ENCODE measurements at regions of chr1 and their contacts with region 1.

Region 1: DNA sequence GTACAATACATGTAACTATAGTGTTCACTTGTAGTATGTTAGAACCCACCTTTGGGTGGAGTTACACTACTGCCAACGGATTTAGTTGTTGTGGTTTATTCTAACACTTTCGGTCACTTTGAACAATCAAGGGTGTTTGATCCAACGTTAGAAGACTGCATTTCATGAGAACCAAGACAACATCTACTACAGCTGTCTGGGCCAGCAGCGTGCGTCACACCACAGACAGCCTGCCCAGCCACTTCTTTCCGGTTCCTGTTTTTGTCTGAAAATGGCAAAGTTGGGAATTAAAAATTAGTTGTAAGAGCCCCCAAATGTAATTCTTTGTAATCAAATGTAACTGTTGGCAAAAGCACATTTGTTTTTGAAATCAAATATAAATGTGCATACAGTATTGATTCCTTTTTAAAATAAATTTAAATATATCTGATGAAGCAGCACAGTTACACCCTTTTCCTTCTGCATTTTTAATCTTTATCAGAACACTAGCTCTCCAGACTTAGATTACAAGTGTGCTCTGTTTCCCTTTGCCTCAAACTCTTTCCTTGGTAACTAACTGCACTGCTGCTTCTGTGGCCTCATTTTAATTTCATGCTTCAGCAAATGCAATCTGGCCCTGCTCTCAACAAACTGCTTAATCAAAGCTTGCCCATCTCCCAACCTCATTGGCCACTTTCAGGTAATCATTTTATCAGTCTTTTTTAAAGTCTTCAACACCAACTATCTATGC is 86.6 kb upstream of the DPH5 start:
- DNase-seq: peak; percentile 53 to 96 (median 73)
- ATAC-seq: peak; percentile 89
- H3K4me3 ChIP-seq: peak overlapping the region in 1 of 2 experiments; percentile 23
- H3K4me3 Mint-ChIP-seq: peak overlapping the region; percentile 66
- H3K27ac ChIP-seq: peak overlapping the region; percentile 84 to 93
- H3K27ac Mint-ChIP-seq: peak overlapping the region; percentile 99
- H3K4me1 ChIP-seq: peaks cover 42% of the 10 kb centered on the region
- H3K4me1 Mint-ChIP-seq: peaks cover 64% of the 10 kb centered on the region
- H3K27me3 ChIP-seq: no peaks in the 10 kb centered on the region
- H3K27me3 Mint-ChIP-seq: no peaks in the 10 kb centered on the region
- CTCF ChIP-seq: no peak

Region 2: DNA sequence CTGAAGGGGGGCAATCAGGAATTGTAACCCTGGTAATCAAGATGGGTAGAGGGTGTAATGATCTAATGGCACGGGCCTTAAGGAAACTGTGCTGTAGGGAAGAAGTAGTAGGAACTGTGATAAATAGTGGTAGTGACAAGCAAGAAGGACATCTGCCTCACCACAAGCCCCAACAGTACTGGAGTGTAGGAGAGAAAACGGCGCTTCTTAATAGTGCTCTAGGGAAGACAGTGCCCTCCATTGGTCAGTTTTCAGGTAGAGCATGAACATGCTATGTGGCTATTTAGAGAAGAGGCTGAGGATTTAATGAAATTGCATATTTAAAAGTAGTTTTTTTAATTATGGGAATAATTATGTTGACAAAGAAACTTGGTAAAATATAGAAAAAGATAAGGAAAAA is 184.1 kb before region 1 on chr1:
- CTCF ChIA-PET with region 1: interaction called, 4 read pairs
- POLR2A ChIA-PET with region 1: interaction called, 4 read pairs
- intact Hi-C with region 1: loop called (anchors 1 to 5 kb)
- DNase-seq: peak in 3 of 9 experiments; percentile 19 to 65 (median 48)
- ATAC-seq: no peak
- H3K4me3 ChIP-seq: peak overlapping the region in 1 of 2 experiments; percentile 13
- H3K4me3 Mint-ChIP-seq: no peak overlapping the region
- H3K27ac ChIP-seq: peak overlapping the region; percentile 40 to 78
- H3K27ac Mint-ChIP-seq: no peak overlapping the region
- H3K4me1 ChIP-seq: peaks cover 85% of the 10 kb centered on the region
- H3K4me1 Mint-ChIP-seq: peaks cover 45% of the 10 kb centered on the region
- H3K27me3 ChIP-seq: no peaks in the 10 kb centered on the region
- H3K27me3 Mint-ChIP-seq: no peaks in the 10 kb centered on the region
- CTCF ChIP-seq: no peak

Region 3: GRCh38 chr1:101060992-101061391 is 51.2 kb before region 1 on chr1:
- CTCF ChIA-PET with region 1: no interaction called
- POLR2A ChIA-PET with region 1: no interaction called
- intact Hi-C with region 1: loop called in 1 of 2 experiments (anchors 5 kb)
- DNase-seq: no peak
- ATAC-seq: no peak
- H3K4me3 ChIP-seq: no peak overlapping the region
- H3K4me3 Mint-ChIP-seq: no peak overlapping the region
- H3K27ac ChIP-seq: no peak overlapping the region
- H3K27ac Mint-ChIP-seq: no peak overlapping the region
- H3K4me1 ChIP-seq: peaks cover 12% of the 10 kb centered on the region
- H3K4me1 Mint-ChIP-seq: peaks cover 32% of the 10 kb centered on the region
- H3K27me3 ChIP-seq: no peaks in the 10 kb centered on the region
- H3K27me3 Mint-ChIP-seq: no peaks in the 10 kb centered on the region
- CTCF ChIP-seq: no peak

Region 4: DNA sequence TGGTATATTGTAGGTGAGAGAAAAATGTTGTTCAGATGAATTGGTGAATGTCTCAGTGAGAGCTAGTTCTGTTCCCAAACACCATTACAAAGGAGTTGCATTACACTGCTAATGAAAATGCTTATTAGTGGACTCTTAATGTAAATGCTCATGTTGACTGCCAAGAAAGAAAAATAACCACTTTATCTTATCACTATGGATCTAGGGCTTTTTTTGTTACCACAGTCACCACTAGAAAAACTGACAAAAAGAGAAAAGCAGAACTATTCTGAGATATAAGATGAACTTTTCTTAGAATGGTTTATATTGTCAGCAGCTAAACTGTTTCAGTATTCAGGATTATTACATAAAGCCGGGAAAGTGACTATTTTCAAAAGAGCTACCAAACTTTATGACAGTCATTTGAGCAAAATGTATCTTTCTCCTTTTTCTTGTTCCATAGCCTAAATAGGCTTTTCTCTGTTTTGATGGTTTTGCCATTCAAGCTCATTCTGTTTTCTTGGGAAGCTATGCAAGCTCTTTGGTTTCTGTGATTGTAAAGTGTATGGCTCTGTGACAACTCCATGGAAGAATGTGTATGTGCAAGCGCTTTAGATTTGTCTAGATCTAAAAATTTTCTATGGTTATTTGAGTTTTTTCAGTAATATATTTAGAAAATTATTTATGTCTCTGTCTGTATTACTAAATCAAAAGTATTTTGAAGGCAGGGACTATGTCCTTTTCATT is 22.4 kb before region 1 on chr1:
- CTCF ChIA-PET with region 1: no interaction called
- POLR2A ChIA-PET with region 1: no interaction called
- intact Hi-C with region 1: no loop called
- DNase-seq: no peak
- ATAC-seq: no peak
- H3K4me3 ChIP-seq: no peak overlapping the region
- H3K4me3 Mint-ChIP-seq: no peak overlapping the region
- H3K27ac ChIP-seq: no peak overlapping the region
- H3K27ac Mint-ChIP-seq: peak overlapping the region; percentile 45
- H3K4me1 ChIP-seq: peaks cover 7% of the 10 kb centered on the region
- H3K4me1 Mint-ChIP-seq: peaks cover 13% of the 10 kb centered on the region
- H3K27me3 ChIP-seq: no peaks in the 10 kb centered on the region
- H3K27me3 Mint-ChIP-seq: no peaks in the 10 kb centered on the region
- CTCF ChIP-seq: no peak

Region 5: GRCh38 chr1:101122452-101123166 is 10.4 kb after region 1 on chr1:
- CTCF ChIA-PET with region 1: interaction called, 4 read pairs
- POLR2A ChIA-PET with region 1: interaction called, 6 read pairs
- intact Hi-C with region 1: loop called in 1 of 2 experiments (anchors 1 kb)
- DNase-seq: peak in 2 of 9 experiments; percentile 64 to 77
- ATAC-seq: peak; percentile 52
- H3K4me3 ChIP-seq: no peak overlapping the region
- H3K4me3 Mint-ChIP-seq: no peak overlapping the region
- H3K27ac ChIP-seq: no peak overlapping the region
- H3K27ac Mint-ChIP-seq: peak overlapping the region; percentile 90
- H3K4me1 ChIP-seq: peaks cover 44% of the 10 kb centered on the region
- H3K4me1 Mint-ChIP-seq: peaks cover 67% of the 10 kb centered on the region
- H3K27me3 ChIP-seq: no peaks in the 10 kb centered on the region
- H3K27me3 Mint-ChIP-seq: no peaks in the 10 kb centered on the region
- CTCF ChIP-seq: no peak

Region 6: DNA sequence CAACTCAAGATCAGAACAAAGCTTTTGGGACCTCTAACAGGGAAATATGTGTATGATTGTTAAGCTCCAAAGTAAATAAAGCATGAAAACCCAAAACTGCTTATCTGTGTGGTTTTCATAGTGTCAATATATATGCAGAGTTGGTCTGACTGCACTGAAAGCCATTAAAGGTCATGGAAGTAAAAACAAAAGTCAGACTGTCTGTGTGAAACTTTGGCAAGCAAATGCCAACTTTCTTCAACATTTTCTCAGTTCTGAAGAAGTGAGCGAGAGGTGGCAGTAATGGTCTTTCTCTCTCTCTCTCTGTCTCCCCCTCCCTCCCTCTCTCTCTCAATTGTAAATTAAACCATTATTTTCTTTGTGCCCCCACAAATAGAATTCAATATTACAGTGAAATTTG is 24.5 kb after region 1 on chr1:
- CTCF ChIA-PET with region 1: interaction called, 3 read pairs
- POLR2A ChIA-PET with region 1: interaction called, 6 read pairs
- intact Hi-C with region 1: loop called in 1 of 2 experiments (anchors 1 kb)
- DNase-seq: peak in 4 of 9 experiments; percentile 21 to 78 (median 50)
- ATAC-seq: peak; percentile 76
- H3K4me3 ChIP-seq: no peak overlapping the region
- H3K4me3 Mint-ChIP-seq: peak overlapping the region; percentile 13
- H3K27ac ChIP-seq: peak overlapping the region; percentile 12 to 50
- H3K27ac Mint-ChIP-seq: peak overlapping the region; percentile 85
- H3K4me1 ChIP-seq: peaks cover 35% of the 10 kb centered on the region
- H3K4me1 Mint-ChIP-seq: peaks cover 60% of the 10 kb centered on the region
- H3K27me3 ChIP-seq: no peaks in the 10 kb centered on the region
- H3K27me3 Mint-ChIP-seq: no peaks in the 10 kb centered on the region
- CTCF ChIP-seq: peak; percentile 58